Activated T-helper 2 cell treated with anti-CD3 and anti-CD28 coated beads, Interferon-gamma antibody, Interleukin-2, Interleukin-4, amounts not matched to agents 10 μg/mL and 5 μg/mL and 100 μg/mL, durations not matched to agents 14 hours and 24 hours and 36 hours (primary cell): ENCODE measurements at regions of chr6 and their contacts with region 1.

Region 1: GRCh38 chr6:52389626-52390360 is 27.8 kb downstream of the PAQR8 start:
- DNase-seq: peak; percentile 55
- H3K4me3 Mint-ChIP-seq: peak overlapping the region; percentile 59
- H3K27ac Mint-ChIP-seq: peak overlapping the region; percentile 84
- H3K4me1 Mint-ChIP-seq: peaks cover 78% of the 10 kb centered on the region
- H3K27me3 Mint-ChIP-seq: no peaks in the 10 kb centered on the region

Region 2: DNA sequence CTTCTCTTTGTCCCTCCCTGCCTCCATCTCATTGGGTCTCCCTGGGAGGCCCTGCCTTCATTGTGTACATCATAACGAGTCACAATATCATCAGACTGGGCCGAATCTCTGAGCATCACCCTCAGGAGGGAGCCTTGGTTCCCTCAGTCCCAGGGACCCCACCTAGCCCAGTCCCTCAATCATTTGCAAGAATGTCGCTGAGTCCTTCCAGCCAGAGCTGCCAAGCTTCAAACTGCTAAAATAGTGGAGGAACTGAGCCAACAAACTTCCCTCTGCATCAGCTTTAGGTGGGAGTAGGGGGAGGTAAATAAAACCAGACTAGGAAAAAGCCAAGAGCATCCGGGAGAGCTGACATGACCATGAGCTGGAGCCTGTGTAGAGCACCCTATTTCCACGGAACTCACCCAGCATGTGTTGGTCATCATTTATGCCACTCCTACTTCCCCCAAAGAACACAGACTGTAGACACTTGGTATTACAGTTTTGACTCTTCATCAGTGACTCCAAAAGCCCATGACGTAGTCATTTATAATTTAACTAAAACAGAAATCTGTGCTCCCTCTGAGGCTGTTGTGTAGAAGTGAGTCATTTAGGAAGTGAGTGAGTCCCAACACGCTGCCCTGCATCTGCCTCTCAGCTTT is 232.4 kb before region 1 on chr6:
- intact Hi-C with region 1: loop called (anchors 1 kb)
- DNase-seq: peak; percentile 13
- H3K4me3 Mint-ChIP-seq: peak overlapping the region; percentile 10
- H3K27ac Mint-ChIP-seq: peak overlapping the region; percentile 96
- H3K4me1 Mint-ChIP-seq: peaks cover 53% of the 10 kb centered on the region
- H3K27me3 Mint-ChIP-seq: peaks cover 8% of the 10 kb centered on the region

Region 3: GRCh38 chr6:52254731-52255378 is 134.9 kb before region 1 on chr6:
- intact Hi-C with region 1: loop called (anchors 1 kb)
- DNase-seq: no peak
- H3K4me3 Mint-ChIP-seq: no peak overlapping the region
- H3K27ac Mint-ChIP-seq: no peak overlapping the region
- H3K4me1 Mint-ChIP-seq: peaks cover 35% of the 10 kb centered on the region
- H3K27me3 Mint-ChIP-seq: peaks cover 31% of the 10 kb centered on the region

Region 4: DNA sequence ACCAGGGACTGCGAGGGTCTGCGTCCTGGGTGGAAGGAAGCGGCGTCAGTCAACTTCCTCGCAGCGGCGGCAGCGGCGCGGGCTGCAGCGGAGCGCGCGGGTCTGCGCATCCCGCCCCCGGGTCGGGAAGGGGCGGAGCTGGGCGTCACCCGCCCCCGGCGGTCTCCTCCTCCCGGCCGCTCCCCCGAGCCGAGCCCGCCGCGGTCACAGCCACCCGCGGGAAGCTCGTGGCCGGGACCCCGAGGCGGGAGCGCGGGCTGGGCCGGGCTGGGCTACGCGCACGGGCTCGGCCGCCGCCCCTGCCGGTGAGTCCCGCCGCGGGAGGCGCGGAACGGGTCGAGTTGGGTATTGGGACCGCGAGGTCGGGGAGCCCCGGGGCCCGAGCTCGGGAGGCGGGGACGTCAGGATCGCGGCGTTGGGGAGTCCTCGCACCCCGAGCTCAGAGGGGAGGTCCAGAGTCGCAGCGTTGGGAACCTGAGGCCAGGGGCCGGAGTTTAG is 27.8 kb before region 1 on chr6 and contains the start of gene PAQR8:
- intact Hi-C with region 1: loop called (anchors 1 kb)
- DNase-seq: peak; percentile 79
- H3K4me3 Mint-ChIP-seq: peak within 1 kb of the TSS; percentile 99
- H3K27ac Mint-ChIP-seq: peak within 1 kb of the TSS; percentile 89
- H3K4me1 Mint-ChIP-seq: peaks cover 25% of the 10 kb centered on the region
- H3K27me3 Mint-ChIP-seq: no peaks in the 10 kb centered on the region
- total RNA-seq, gene PAQR8: 6.8 and 8.8 TPM in 2 replicates

Region 5: GRCh38 chr6:52546678-52547077 is 156.9 kb after region 1 on chr6:
- intact Hi-C with region 1: no loop called
- DNase-seq: no peak
- H3K4me3 Mint-ChIP-seq: no peak overlapping the region
- H3K27ac Mint-ChIP-seq: no peak overlapping the region
- H3K4me1 Mint-ChIP-seq: peaks cover 18% of the 10 kb centered on the region
- H3K27me3 Mint-ChIP-seq: no peaks in the 10 kb centered on the region

Region 6: GRCh38 chr6:52984247-52984646 is 594.5 kb after region 1 on chr6:
- intact Hi-C with region 1: loop called (anchors 5 kb)
- DNase-seq: peak; percentile 43
- H3K4me3 Mint-ChIP-seq: peak overlapping the region; percentile 37
- H3K27ac Mint-ChIP-seq: peak overlapping the region; percentile 90
- H3K4me1 Mint-ChIP-seq: peaks cover 73% of the 10 kb centered on the region
- H3K27me3 Mint-ChIP-seq: no peaks in the 10 kb centered on the region